Activated naive CD4-positive, alpha-beta T cell treated with anti-CD3 and anti-CD28 coated beads for 36 hours (primary cell): ENCODE measurements at regions of chr19 and their contacts with region 1.

Region 1: GRCh38 chr19:55653758-55654539 is 886 bp upstream of the U2AF2 start:
- DNase-seq: peak; percentile 100
- H3K4me3 Mint-ChIP-seq: peak overlapping the region; percentile 88
- H3K27ac Mint-ChIP-seq: peak overlapping the region; percentile 98
- H3K4me1 Mint-ChIP-seq: peaks cover 43% of the 10 kb centered on the region
- H3K27me3 Mint-ChIP-seq: no peaks in the 10 kb centered on the region

Region 2: DNA sequence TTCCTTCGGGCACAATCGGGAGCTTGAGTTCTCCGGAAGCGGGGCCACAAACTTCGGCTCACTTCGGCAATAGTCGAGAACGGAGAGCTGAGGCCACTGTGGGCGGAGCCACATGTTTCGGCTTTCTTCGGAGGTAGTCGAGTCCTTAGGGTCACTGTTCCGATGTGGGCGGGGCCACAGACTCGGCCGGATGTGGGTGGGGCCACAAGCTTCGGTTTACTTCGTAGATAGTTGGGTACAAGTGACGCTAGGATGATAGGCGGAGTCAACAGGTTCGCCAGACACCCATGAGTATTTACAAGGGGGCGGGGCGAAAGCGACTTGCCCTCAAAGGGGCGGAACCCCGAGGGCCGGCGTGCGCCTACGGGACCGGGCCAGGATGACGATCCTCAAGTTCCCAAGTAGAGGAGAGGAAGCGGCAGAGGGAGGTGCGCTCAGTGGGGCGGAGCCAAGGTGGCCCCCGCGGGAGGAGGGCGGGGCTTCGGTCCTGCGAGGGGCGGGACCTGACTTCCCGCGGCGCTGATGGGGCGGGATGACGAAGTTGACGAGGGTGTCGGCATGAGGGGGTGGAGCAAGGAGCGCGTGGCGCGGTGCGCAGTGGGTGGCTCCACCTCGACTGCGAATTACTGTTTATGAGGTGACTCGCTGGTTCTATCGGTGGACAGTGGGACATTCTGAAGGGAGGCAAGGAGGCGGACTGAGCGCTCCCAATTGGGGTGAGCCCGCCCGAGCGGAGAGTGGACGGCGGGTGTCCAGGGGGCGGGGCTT is 1464.0 kb before region 1 on chr19:
- CTCF ChIA-PET with region 1: no interaction called
- intact Hi-C with region 1: loop called (anchors 2 kb)
- DNase-seq: peak; percentile 100
- H3K4me3 Mint-ChIP-seq: peak overlapping the region; percentile 82
- H3K27ac Mint-ChIP-seq: peak overlapping the region; percentile 96
- H3K4me1 Mint-ChIP-seq: peaks cover 31% of the 10 kb centered on the region
- H3K27me3 Mint-ChIP-seq: no peaks in the 10 kb centered on the region

Region 3: GRCh38 chr19:55599468-55600279 is 54.3 kb before region 1 on chr19 and contains the start of gene FIZ1:
- CTCF ChIA-PET with region 1: interaction called, 4 read pairs
- intact Hi-C with region 1: loop called (anchors 1 kb)
- DNase-seq: peak; percentile 98
- H3K4me3 Mint-ChIP-seq: peak within 1 kb of the TSS; percentile 88
- H3K27ac Mint-ChIP-seq: peak within 1 kb of the TSS; percentile 99
- H3K4me1 Mint-ChIP-seq: peaks cover 31% of the 10 kb centered on the region
- H3K27me3 Mint-ChIP-seq: no peaks in the 10 kb centered on the region
- total RNA-seq, gene FIZ1: 12.8 to 14.8 TPM

Region 4: GRCh38 chr19:55624109-55625003 is 29.6 kb before region 1 on chr19 and contains the start of gene ZNF784:
- CTCF ChIA-PET with region 1: interaction called, 4 read pairs
- intact Hi-C with region 1: loop called (anchors 1 kb)
- DNase-seq: peak; percentile 93
- H3K4me3 Mint-ChIP-seq: peak within 1 kb of the TSS; percentile 92
- H3K27ac Mint-ChIP-seq: peak within 1 kb of the TSS; percentile 95
- H3K4me1 Mint-ChIP-seq: peaks cover 56% of the 10 kb centered on the region
- H3K27me3 Mint-ChIP-seq: no peaks in the 10 kb centered on the region
- total RNA-seq, gene ZNF784: 3.7 to 4.0 TPM

Region 5: DNA sequence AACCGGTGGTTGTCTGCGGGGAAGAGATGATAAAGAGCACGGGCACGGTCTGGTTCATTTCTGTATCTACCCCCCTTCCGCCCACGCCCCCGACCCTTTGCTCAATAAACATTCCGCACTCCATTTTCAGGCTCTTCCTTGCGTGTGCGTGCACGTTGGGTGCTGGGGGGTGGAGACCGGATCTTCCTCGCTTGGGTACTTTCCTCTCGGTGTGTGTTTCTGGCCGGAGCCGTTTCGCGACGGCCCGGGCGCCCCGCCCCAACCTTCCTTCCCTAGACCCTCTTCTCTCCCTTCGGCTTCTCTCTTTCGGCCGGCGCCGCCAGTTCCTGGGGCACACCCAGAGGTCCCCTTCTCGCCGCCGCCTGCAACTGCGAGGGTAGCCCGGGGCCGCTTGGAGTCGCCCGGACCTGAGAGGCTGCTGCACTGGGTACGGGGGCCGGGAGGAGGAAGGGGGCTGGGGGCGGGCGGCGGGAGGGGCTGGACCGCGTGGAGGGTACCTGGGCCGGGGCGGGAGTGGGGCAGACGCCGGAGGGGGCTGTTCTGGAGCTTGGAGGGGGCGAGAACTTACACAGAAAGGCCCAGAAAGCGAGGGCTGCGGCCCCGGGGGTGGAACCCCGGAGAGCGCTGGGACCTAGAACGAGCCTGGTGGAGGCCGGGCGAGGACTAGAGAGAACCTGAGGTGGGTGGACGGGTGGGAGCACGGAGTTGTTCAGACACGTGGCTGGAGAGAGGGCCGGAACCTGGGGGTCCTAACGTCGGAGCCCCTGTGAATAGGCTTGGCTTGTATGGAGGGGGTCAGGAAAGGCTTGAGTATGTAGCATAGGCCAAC is 10.4 kb before region 1 on chr19 and contains the start of gene ZNF581:
- CTCF ChIA-PET with region 1: interaction called, 7 read pairs
- intact Hi-C with region 1: loop called (anchors 1 kb)
- DNase-seq: peak; percentile 82
- H3K4me3 Mint-ChIP-seq: peak within 1 kb of the TSS; percentile 93
- H3K27ac Mint-ChIP-seq: peak within 1 kb of the TSS; percentile 96
- H3K4me1 Mint-ChIP-seq: peaks cover 44% of the 10 kb centered on the region
- H3K27me3 Mint-ChIP-seq: no peaks in the 10 kb centered on the region
- total RNA-seq, gene ZNF581: 18.0 to 20.7 TPM

Region 6: GRCh38 chr19:56121180-56122167 is 467.5 kb after region 1 on chr19 and contains the start of gene ZNF787:
- CTCF ChIA-PET with region 1: no interaction called
- intact Hi-C with region 1: loop called (anchors 1 kb)
- DNase-seq: peak; percentile 95
- H3K4me3 Mint-ChIP-seq: peak within 1 kb of the TSS; percentile 86
- H3K27ac Mint-ChIP-seq: peak within 1 kb of the TSS; percentile 94
- H3K4me1 Mint-ChIP-seq: peaks cover 52% of the 10 kb centered on the region
- H3K27me3 Mint-ChIP-seq: no peaks in the 10 kb centered on the region
- total RNA-seq, gene ZNF787: 24.2 to 26.1 TPM

Region 7: DNA sequence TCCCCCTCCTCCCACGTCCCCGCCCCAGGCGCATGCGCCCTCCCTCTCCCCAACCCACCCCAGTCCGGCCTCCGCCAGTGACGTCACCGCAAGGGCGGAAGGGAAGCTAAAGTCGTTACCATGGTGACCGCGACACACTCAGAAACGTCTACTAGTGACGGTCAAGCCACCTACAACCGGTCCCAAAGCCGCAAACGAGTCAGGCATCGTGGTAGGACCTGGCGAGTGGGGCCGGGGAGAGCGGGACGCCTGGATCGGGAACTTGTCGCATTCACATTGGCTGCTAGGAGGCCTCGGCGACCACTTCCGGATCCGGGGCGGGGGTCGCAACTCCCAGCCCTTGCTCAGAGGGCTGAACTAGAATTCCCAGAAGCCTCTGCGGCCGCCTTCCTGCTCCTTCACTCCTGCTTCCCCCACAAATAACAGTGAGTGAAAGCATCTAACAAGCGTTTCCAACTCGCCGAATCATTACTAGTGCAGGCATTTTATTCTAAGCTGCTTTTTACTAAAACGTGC is 660.7 kb after region 1 on chr19 and contains the start of gene ZSCAN5A:
- CTCF ChIA-PET with region 1: no interaction called
- intact Hi-C with region 1: loop called (anchors 10 kb)
- DNase-seq: peak; percentile 97
- H3K4me3 Mint-ChIP-seq: peak within 1 kb of the TSS; percentile 82
- H3K27ac Mint-ChIP-seq: peak within 1 kb of the TSS; percentile 96
- H3K4me1 Mint-ChIP-seq: peaks cover 22% of the 10 kb centered on the region
- H3K27me3 Mint-ChIP-seq: no peaks in the 10 kb centered on the region
- total RNA-seq, gene ZSCAN5A: 3.7 to 4.1 TPM